AG04449 (cell line): ENCODE measurements at regions of chr11 and their contacts with region 1.

Region 1: GRCh38 chr11:63838678-63839507 is at the start of gene MARK2:
- DNase-seq: peak; percentile 79
- H3K4me3 ChIP-seq: peak within 1 kb of the TSS; percentile 78
- CTCF ChIP-seq: no peak

Region 2: DNA sequence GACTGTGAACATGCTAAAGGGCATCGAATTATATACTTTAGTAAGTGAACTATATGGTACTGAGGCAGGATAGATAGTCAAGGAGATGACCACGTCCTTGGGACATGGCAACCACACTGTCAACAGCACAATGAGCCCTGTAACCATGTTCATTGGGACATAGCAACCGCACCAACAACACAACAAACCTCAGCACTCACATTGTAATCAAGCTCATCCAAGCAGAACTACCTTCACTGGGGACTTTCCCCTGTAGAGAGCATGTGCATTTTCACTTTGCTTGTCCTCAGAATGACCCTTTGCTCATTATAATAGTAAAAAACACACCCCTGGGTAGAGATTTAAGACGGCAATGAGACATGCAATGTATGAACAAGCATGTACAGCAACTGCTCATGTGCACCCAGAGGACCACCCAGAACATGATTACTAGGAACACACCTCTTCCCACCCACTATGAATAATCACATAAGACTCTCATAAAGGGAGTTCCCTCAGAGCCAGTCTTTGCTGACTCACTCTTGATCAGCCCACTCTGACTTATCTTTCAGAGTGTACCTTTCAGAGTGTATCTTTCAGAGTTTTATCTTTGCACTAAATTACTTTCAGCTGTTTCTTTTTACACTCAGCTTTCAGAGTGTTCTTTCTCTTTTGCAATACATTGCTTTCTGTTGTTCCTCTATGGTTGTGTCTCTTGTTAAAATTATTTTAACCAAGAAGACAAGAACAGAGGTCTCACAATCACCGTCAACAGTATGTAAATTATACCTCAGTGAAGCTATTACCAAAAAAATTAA is 271.7 kb before region 1 on chr11:
- CTCF ChIA-PET with region 1: no interaction called
- POLR2A ChIA-PET with region 1: no interaction called
- DNase-seq: peak; percentile 42
- H3K4me3 ChIP-seq: no peak overlapping the region
- CTCF ChIP-seq: no peak

Region 3: GRCh38 chr11:63710476-63711217 is 128.2 kb before region 1 on chr11:
- CTCF ChIA-PET with region 1: no interaction called
- POLR2A ChIA-PET with region 1: no interaction called
- DNase-seq: peak; percentile 74
- H3K4me3 ChIP-seq: no peak overlapping the region
- CTCF ChIP-seq: peak; percentile 33

Region 4: GRCh38 chr11:63817758-63818498 is 21.0 kb before region 1 on chr11:
- CTCF ChIA-PET with region 1: interaction called, 51 read pairs
- POLR2A ChIA-PET with region 1: no interaction called
- DNase-seq: no peak
- H3K4me3 ChIP-seq: no peak overlapping the region
- CTCF ChIP-seq: no peak

Region 5: DNA sequence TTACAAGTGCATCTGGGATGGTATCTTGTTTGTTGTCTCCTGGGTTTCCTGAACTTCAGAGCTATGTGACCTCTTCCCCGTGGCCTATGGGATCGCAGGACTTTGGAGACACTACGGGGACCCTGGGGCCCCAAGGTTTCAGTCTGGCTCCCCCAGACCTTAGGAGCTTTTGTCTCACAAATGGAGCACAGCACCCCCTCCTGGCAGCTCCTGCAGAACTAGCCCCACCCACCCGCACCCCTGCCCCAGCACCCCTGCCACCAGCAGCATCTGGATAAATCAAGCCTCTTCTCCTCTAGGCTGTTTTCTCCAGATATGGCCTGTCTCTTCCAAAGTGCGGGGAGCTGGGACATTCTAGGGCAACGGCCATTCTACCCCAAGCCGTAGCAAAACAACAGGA is 67.7 kb after region 1 on chr11:
- CTCF ChIA-PET with region 1: interaction called, 46 read pairs
- POLR2A ChIA-PET with region 1: no interaction called
- DNase-seq: no peak
- H3K4me3 ChIP-seq: no peak overlapping the region
- CTCF ChIP-seq: no peak

Region 6: DNA sequence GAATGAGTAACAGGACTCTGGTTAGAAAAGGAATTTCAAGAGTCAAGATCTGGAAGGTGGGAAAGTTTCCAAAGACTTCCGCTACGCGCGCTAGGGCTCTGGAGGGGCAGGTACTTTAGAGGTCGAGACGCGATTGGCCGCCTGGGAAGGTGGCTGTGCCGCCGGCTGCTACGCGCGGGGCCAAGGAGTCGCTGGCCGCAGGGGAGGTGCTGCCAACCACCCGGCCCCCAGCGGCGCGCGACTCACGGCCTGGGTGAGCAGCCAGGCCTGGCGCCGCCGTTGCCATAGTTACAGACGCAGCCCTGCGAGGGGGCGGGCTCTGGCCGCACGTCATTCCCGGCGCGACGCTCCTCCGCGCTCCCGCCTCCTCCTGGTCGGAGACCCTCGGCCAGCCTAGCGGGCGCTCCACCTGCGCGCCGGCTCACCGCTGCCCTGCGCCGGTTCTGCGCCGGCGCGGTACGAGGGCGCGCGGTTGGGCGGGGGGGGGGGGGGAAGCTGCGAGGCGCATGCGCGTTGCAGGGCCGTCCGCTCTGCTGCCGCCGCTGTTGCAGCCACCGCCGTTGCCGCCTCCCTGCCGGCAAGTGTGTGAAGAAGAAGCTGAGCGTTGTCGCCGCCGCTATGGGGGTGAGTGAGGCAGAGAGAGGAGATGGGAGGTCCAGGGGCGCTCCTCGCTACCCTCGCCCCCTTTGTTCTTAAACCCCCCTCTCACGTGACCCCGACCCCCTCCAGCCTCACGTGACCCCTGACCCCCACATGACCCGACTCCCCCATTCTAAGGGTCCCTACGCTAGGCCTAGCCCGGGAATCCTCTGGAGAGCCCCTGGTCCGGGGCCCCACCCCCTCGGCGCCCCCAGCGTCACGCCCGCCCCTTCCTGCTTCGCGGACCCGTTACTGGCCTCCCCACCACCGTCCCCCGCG is 99.8 kb after region 1 on chr11 and contains the start of gene NAA40:
- CTCF ChIA-PET with region 1: interaction called, 639 read pairs
- POLR2A ChIA-PET with region 1: no interaction called
- DNase-seq: peak; percentile 63
- H3K4me3 ChIP-seq: peak within 1 kb of the TSS; percentile 94
- CTCF ChIP-seq: peak; percentile 9

Region 7: DNA sequence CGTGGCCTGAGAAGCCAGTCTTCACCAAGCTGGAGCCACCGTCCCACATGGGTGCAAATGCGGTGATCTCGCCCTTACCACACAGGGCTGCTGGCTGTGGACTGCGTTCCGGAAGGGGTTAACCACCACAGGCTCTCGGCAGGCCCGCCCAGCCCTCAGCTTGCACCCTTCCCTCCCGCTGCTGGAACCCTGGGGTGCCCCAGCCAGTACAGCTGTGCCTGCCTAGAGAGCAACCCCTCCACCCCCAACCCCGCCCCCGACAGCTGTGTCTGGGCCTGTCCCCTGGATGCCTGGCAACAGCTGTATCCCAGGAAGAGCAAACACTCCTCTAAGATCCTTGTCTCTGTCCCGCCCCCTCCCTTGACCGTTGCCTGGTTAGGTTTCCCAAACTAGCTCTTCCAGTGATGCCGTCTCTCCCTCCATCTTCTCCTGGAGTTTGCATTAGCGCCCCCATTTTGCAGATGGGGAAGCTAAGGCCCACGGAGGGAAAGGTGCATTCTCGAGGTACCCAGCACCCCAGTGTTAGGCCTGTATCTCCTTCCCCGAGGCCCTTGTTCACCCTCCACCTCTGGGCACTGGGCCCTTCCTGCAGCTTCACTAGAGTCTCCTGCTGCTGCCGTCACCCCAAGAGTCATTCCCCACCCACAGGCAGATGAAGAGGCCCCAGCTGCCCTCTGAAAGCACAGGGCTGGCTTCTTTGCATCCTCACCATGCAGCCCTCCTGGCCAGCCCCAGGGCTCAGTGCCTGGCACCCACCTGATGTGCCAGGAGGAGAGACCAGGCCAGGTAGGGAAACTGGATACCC is 122.9 kb after region 1 on chr11:
- CTCF ChIA-PET with region 1: interaction called, 16 read pairs
- POLR2A ChIA-PET with region 1: no interaction called
- DNase-seq: no peak
- H3K4me3 ChIP-seq: no peak overlapping the region
- CTCF ChIP-seq: no peak

Region 8: GRCh38 chr11:64152841-64153691 is 314.2 kb after region 1 on chr11:
- CTCF ChIA-PET with region 1: interaction called, 125 read pairs
- POLR2A ChIA-PET with region 1: no interaction called
- DNase-seq: no peak
- H3K4me3 ChIP-seq: no peak overlapping the region
- CTCF ChIP-seq: peak; percentile 99